Mammary epithelial cell (primary cell): ENCODE measurements at regions of chr19 and their contacts with region 1.

Region 1: GRCh38 chr19:49929611-49930482 is 543 bp upstream of the NUP62 start:
- DNase-seq: peak; percentile 88
- H3K4me3 ChIP-seq: peak overlapping the region; percentile 88 to 99 (median 97)
- H3K27ac ChIP-seq: peak overlapping the region; percentile 86
- H3K4me1 ChIP-seq: peaks cover 8% of the 10 kb centered on the region
- H3K27me3 ChIP-seq: no peaks in the 10 kb centered on the region
- CTCF ChIP-seq: peak in 1 of 2 donors; percentile 3

Region 2: GRCh38 chr19:49877020-49877878 is 52.6 kb before region 1 on chr19 and contains the starts of genes AKT1S1 and TBC1D17:
- CTCF ChIA-PET with region 1: no interaction called
- dilution Hi-C with region 1: no loop called
- in situ Hi-C with region 1: no loop called
- intact Hi-C with region 1: loop called (anchors 2 kb)
- DNase-seq: peak; percentile 100
- H3K4me3 ChIP-seq: peak within 1 kb of the TSS; percentile 86 to 98 (median 92)
- H3K27ac ChIP-seq: peak within 1 kb of the TSS; percentile 98
- H3K4me1 ChIP-seq: peaks cover 24% of the 10 kb centered on the region
- H3K27me3 ChIP-seq: no peaks in the 10 kb centered on the region
- CTCF ChIP-seq: no peak
- total RNA-seq, gene AKT1S1: 12.3 to 68.3 TPM
- total RNA-seq, gene TBC1D17: 13.0 to 32.0 TPM

Region 3: GRCh38 chr19:49896863-49897621 is 32.8 kb before region 1 on chr19 and contains the start of gene IL4I1:
- CTCF ChIA-PET with region 1: no interaction called
- dilution Hi-C with region 1: no loop called
- in situ Hi-C with region 1: no loop called
- intact Hi-C with region 1: loop called (anchors 2 kb)
- DNase-seq: no peak
- H3K4me3 ChIP-seq: no peak within 1 kb of the TSS
- H3K27ac ChIP-seq: no peak within 1 kb of the TSS
- H3K4me1 ChIP-seq: no peaks in the 10 kb centered on the region
- H3K27me3 ChIP-seq: no peaks in the 10 kb centered on the region
- CTCF ChIP-seq: no peak
- total RNA-seq, gene IL4I1: not detected

Region 4: GRCh38 chr19:49973987-49974386 is 44.1 kb after region 1 on chr19:
- CTCF ChIA-PET with region 1: no interaction called
- dilution Hi-C with region 1: no loop called
- in situ Hi-C with region 1: no loop called
- intact Hi-C with region 1: no loop called
- DNase-seq: no peak
- H3K4me3 ChIP-seq: no peak overlapping the region
- H3K27ac ChIP-seq: no peak overlapping the region
- H3K4me1 ChIP-seq: no peaks in the 10 kb centered on the region
- H3K27me3 ChIP-seq: no peaks in the 10 kb centered on the region
- CTCF ChIP-seq: no peak

Region 5: GRCh38 chr19:49987159-49987698 is 57.4 kb after region 1 on chr19:
- CTCF ChIA-PET with region 1: no interaction called
- dilution Hi-C with region 1: no loop called
- in situ Hi-C with region 1: no loop called
- intact Hi-C with region 1: no loop called
- DNase-seq: peak; percentile 88
- H3K4me3 ChIP-seq: no peak overlapping the region
- H3K27ac ChIP-seq: no peak overlapping the region
- H3K4me1 ChIP-seq: no peaks in the 10 kb centered on the region
- H3K27me3 ChIP-seq: no peaks in the 10 kb centered on the region
- CTCF ChIP-seq: peak in 1 of 2 donors; percentile 8

Region 6: GRCh38 chr19:50147462-50148423 is 217.9 kb after region 1 on chr19:
- CTCF ChIA-PET with region 1: no interaction called
- dilution Hi-C with region 1: no loop called
- in situ Hi-C with region 1: loop called (anchors 25 kb)
- intact Hi-C with region 1: no loop called
- DNase-seq: peak; percentile 87
- H3K4me3 ChIP-seq: peak overlapping the region; percentile 30 to 58 (median 51)
- H3K27ac ChIP-seq: no peak overlapping the region
- H3K4me1 ChIP-seq: no peaks in the 10 kb centered on the region
- H3K27me3 ChIP-seq: no peaks in the 10 kb centered on the region
- CTCF ChIP-seq: peak in 1 of 2 donors; percentile 36